Activated CD4-positive, alpha-beta memory T cell treated with anti-CD3 and anti-CD28 coated beads, Interleukin-2, amount 10 ng/mL, durations not matched to agents 7 days and 5 days (primary cell): ENCODE measurements at regions of chr16 and their contacts with region 1.

Region 1: DNA sequence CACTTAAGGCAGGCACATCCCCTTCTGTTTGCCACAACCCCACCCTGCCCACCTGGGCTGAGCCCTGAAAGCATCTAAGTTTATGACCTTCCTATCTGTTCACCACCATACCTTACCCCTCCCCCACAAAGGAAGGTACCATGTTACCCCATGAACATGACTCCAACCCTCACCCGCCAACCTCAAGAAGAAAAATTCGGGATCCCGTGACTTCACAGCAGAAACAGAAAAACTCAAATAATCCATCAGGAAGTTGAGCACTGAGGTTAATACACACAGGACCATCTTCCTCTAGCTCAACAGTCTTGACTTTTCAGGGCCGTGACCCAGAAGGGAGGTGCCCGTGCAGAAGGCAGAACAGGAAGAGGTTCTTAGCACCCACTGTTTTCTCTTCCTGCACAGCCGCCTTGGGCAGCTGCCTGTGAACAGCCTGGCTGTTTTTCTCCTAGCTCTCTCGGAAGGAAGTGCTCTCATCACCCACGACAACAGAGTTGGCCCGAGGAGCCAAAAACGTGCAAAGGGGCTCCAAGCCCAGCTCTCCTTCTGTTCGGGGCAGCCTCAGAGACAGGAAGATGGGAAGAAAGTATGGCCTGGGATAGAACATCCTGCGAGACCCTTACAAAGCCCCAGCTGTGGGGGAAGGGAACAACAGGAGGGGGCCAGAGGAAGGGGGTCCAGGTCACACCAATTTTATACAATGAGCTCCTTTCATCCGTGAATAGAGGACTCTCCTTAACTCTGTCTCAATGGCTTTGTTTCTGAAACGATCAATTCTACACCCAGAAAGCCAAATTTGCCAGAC is 101.1 kb downstream of the XYLT1 start:
- DNase-seq: peak; percentile 83
- H3K4me3 Mint-ChIP-seq: peak overlapping the region; percentile 84
- H3K27ac Mint-ChIP-seq: peak overlapping the region; percentile 99
- H3K4me1 Mint-ChIP-seq: peaks cover 86% of the 10 kb centered on the region
- H3K27me3 Mint-ChIP-seq: no peaks in the 10 kb centered on the region

Region 2: GRCh38 chr16:17283016-17283415 is 86.6 kb before region 1 on chr16:
- CTCF ChIA-PET with region 1: no interaction called
- POLR2A ChIA-PET with region 1: no interaction called
- DNase-seq: no peak
- H3K4me3 Mint-ChIP-seq: no peak overlapping the region
- H3K27ac Mint-ChIP-seq: no peak overlapping the region
- H3K4me1 Mint-ChIP-seq: peaks cover 1% of the 10 kb centered on the region
- H3K27me3 Mint-ChIP-seq: no peaks in the 10 kb centered on the region

Region 3: GRCh38 chr16:17343028-17343427 is 26.6 kb before region 1 on chr16:
- CTCF ChIA-PET with region 1: interaction called, 23 read pairs
- POLR2A ChIA-PET with region 1: interaction called, 353 read pairs
- DNase-seq: peak; percentile 74
- H3K4me3 Mint-ChIP-seq: peak overlapping the region; percentile 34
- H3K27ac Mint-ChIP-seq: peak overlapping the region; percentile 90
- H3K4me1 Mint-ChIP-seq: peaks cover 79% of the 10 kb centered on the region
- H3K27me3 Mint-ChIP-seq: no peaks in the 10 kb centered on the region

Region 4: GRCh38 chr16:17382949-17383863 is 13.6 kb after region 1 on chr16:
- CTCF ChIA-PET with region 1: interaction called, 6 read pairs
- POLR2A ChIA-PET with region 1: interaction called, 19 read pairs
- DNase-seq: peak; percentile 29
- H3K4me3 Mint-ChIP-seq: no peak overlapping the region
- H3K27ac Mint-ChIP-seq: peak overlapping the region; percentile 55
- H3K4me1 Mint-ChIP-seq: peaks cover 36% of the 10 kb centered on the region
- H3K27me3 Mint-ChIP-seq: no peaks in the 10 kb centered on the region

Region 5: GRCh38 chr16:17416461-17417311 is 47.1 kb after region 1 on chr16:
- CTCF ChIA-PET with region 1: interaction called, 19 read pairs
- POLR2A ChIA-PET with region 1: interaction called, 50 read pairs
- DNase-seq: peak; percentile 58
- H3K4me3 Mint-ChIP-seq: peak overlapping the region; percentile 40
- H3K27ac Mint-ChIP-seq: peak overlapping the region; percentile 86
- H3K4me1 Mint-ChIP-seq: peaks cover 48% of the 10 kb centered on the region
- H3K27me3 Mint-ChIP-seq: no peaks in the 10 kb centered on the region

Region 6: DNA sequence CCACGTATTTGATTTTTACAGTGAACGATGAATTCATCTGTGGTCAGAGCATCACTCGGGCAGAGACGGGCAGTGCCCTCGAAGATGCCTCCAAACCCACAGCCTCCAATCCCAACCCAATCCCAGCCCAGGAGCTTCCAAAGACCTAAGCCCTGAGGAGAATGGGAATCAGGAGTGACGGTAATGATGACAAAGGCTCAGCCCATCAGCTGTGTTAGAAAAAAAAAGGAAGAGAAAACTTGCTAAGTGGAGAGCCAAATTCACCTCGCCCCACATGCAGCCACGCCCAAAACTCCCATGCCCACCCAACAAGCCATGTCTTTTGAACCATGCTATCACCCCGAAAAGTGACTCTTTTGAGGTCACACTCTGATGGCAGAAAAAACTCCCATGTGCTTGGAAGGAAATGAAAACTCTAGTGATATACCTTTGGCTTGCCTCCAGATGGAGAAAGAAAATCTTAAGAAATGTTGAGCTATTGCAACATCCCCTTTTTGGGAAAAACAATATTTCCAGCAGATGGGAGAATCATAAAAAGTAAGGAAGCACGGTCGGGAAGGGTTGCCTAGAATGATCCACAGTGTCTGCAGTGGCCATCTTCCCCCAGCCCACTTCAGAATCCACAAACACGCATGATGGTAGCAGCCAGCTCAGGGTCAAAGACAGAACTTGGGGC is 63.4 kb after region 1 on chr16:
- CTCF ChIA-PET with region 1: no interaction called
- POLR2A ChIA-PET with region 1: no interaction called
- DNase-seq: no peak
- H3K4me3 Mint-ChIP-seq: no peak overlapping the region
- H3K27ac Mint-ChIP-seq: no peak overlapping the region
- H3K4me1 Mint-ChIP-seq: peaks cover 7% of the 10 kb centered on the region
- H3K27me3 Mint-ChIP-seq: no peaks in the 10 kb centered on the region

Region 7: DNA sequence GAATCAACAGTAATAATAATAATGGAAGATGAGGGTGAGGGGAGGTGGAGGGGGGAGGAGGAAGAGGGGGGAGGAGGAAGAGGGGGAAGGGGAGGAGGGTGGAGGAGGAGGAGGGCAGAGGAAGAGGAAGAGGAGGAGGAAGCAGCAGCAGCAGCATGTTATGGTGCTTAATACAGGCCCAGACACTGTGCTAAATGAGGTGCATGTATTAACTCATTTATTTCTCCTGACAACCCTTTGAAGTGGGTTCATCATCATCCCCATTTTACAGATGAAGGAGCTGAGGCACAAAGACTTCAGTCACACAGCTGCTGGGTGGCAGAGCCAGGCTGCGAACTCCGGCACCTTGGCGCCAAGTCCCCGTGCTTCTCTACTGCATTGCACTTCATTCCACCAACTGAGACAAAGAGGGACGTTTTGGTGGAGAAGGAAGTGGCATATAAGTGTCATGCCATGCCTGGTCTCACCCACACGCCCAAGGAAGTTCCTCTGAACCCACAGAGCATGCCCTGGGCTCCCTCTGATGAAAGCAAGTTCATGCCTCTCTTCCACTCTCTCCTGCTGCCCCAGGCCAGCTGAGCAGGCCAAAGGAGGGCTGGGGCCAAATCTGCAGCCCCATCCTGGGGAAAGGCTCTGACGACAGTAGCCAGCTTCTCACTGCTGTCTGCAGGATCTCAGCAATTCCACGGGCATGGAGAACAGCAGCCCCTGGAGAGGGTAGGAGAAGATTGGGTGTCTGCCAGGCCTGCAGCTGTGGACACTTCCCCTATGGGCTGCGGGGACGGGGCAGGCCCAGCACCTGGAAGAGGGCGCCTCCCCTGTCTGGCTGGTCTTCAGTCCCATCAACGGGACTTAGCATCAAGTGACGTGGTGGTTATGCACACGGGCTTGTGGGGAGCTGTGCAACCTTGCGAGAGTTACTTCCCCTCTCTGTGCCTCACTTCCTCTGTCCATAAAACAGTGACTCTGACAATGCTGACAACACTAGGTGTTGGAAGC is 79.3 kb after region 1 on chr16:
- CTCF ChIA-PET with region 1: interaction called, 9 read pairs
- POLR2A ChIA-PET with region 1: interaction called, 36 read pairs
- DNase-seq: peak; percentile 71
- H3K4me3 Mint-ChIP-seq: peak overlapping the region; percentile 45
- H3K27ac Mint-ChIP-seq: peak overlapping the region; percentile 98
- H3K4me1 Mint-ChIP-seq: peaks cover 62% of the 10 kb centered on the region
- H3K27me3 Mint-ChIP-seq: no peaks in the 10 kb centered on the region

Region 8: GRCh38 chr16:17467923-17468540 is 98.4 kb after region 1 on chr16:
- CTCF ChIA-PET with region 1: interaction called, 4 read pairs
- POLR2A ChIA-PET with region 1: interaction called, 15 read pairs
- DNase-seq: peak; percentile 52
- H3K4me3 Mint-ChIP-seq: peak overlapping the region; percentile 77
- H3K27ac Mint-ChIP-seq: no peak overlapping the region
- H3K4me1 Mint-ChIP-seq: peaks cover 55% of the 10 kb centered on the region
- H3K27me3 Mint-ChIP-seq: no peaks in the 10 kb centered on the region

Region 9: DNA sequence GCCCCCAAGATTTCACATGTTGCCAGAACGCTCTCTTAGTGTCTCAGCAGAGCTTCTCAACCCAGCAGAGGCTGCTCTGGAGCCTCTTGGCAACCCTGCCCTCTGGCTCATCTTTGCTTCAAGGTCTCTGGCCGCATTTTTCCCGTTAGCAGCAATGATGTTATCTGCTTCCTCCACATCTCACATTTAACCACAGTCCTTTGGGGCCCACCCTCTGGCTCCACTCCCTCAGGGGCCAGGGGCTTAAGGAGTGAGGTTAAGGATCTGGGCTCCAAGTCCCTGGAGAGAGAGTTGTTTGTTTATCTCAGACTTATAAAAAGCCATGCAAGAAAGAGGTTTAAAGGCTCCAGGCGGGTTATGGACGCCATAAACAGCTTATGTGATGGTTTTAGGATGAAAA is 104.5 kb after region 1 on chr16:
- CTCF ChIA-PET with region 1: interaction called, 9 read pairs
- POLR2A ChIA-PET with region 1: interaction called, 15 read pairs
- DNase-seq: no peak
- H3K4me3 Mint-ChIP-seq: peak overlapping the region; percentile 46
- H3K27ac Mint-ChIP-seq: peak overlapping the region; percentile 79
- H3K4me1 Mint-ChIP-seq: peaks cover 50% of the 10 kb centered on the region
- H3K27me3 Mint-ChIP-seq: peaks cover 8% of the 10 kb centered on the region